Ovary (tissue), 10 donors: ENCODE measurements at regions of chr14 and their contacts with region 1.

Region 1: DNA sequence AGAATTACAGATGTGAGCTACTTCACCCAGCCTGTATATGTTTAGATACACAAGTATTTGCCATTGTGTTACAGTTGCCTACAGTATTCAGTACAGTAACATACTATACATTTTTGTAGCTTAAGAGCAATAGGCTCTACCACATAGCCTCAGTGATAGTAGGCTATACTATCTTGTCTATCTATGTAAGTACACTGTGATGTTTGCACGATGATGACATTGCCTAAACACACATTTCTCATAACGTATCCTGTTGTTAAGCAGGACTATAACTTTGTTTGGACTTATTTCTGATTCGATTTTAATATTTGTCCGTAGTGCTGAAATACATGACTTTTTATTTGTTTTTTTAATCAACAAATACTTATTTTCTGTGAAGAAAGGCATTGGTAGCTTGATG is 129.2 kb downstream of the PCNX1 start:
- DNase-seq: no peak
- H3K4me3 ChIP-seq: no peak overlapping the region
- H3K27ac ChIP-seq: no peak overlapping the region
- H3K4me1 ChIP-seq: no peaks in the 10 kb centered on the region
- H3K27me3 ChIP-seq: no peaks in the 10 kb centered on the region
- CTCF ChIP-seq: no peak
- EP300 ChIP-seq: no peak
- POLR2A ChIP-seq: no peak

Region 2: GRCh38 chr14:70780396-70781075 is 255.9 kb before region 1 on chr14:
- intact Hi-C with region 1: no loop called
- DNase-seq: no peak
- H3K4me3 ChIP-seq: no peak overlapping the region
- H3K27ac ChIP-seq: no peak overlapping the region
- H3K4me1 ChIP-seq: no peaks in the 10 kb centered on the region
- H3K27me3 ChIP-seq: no peaks in the 10 kb centered on the region
- CTCF ChIP-seq: no peak
- EP300 ChIP-seq: no peak
- POLR2A ChIP-seq: no peak

Region 3: GRCh38 chr14:71021347-71022014 is 15.0 kb before region 1 on chr14:
- intact Hi-C with region 1: loop called in 1 of 4 experiments (anchors 2 kb)
- DNase-seq: no peak
- H3K4me3 ChIP-seq: no peak overlapping the region
- H3K27ac ChIP-seq: no peak overlapping the region
- H3K4me1 ChIP-seq: no peaks in the 10 kb centered on the region
- H3K27me3 ChIP-seq: no peaks in the 10 kb centered on the region
- CTCF ChIP-seq: no peak
- EP300 ChIP-seq: no peak
- POLR2A ChIP-seq: no peak